Activated T-helper 2 cell treated with anti-CD3 and anti-CD28 coated beads, Interferon-gamma antibody, Interleukin-2, Interleukin-4, amounts not matched to agents 10 μg/mL and 5 μg/mL and 100 μg/mL, durations not matched to agents 14 hours and 24 hours and 36 hours (primary cell): ENCODE measurements at regions of chr15 and their contacts with region 1.

Region 1: GRCh38 chr15:41416742-41417406 is at the start of gene RTF1:
- DNase-seq: peak; percentile 96
- H3K4me3 Mint-ChIP-seq: peak within 1 kb of the TSS; percentile 94
- H3K27ac Mint-ChIP-seq: peak within 1 kb of the TSS; percentile 88
- H3K4me1 Mint-ChIP-seq: peaks cover 38% of the 10 kb centered on the region
- H3K27me3 Mint-ChIP-seq: no peaks in the 10 kb centered on the region
- total RNA-seq, gene RTF1: 40.1 and 40.7 TPM in 2 replicates

Region 2: DNA sequence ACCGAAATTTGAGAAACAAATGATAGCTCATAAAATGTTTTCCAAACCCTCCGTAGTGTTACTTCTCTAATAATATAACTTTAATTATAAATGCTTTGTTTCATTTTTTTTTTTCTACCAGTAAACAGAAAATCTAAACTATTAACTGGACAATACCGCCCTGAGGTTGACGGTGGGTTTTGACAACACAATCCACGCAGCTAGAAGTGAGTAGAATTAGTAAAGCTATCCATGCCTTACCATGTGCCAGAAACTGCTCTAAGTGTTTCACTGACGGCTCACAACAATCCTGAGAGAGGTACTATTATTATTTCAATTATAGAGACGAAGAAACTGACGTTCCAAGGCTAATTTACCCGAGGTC is 15.0 kb before region 1 on chr15:
- intact Hi-C with region 1: loop called (anchors 1 kb)
- DNase-seq: no peak
- H3K4me3 Mint-ChIP-seq: peak overlapping the region; percentile 94
- H3K27ac Mint-ChIP-seq: peak overlapping the region; percentile 94
- H3K4me1 Mint-ChIP-seq: peaks cover 17% of the 10 kb centered on the region
- H3K27me3 Mint-ChIP-seq: no peaks in the 10 kb centered on the region